ENCODE measurements at regions of chr1 and their contacts with region 1.

Region 1: DNA sequence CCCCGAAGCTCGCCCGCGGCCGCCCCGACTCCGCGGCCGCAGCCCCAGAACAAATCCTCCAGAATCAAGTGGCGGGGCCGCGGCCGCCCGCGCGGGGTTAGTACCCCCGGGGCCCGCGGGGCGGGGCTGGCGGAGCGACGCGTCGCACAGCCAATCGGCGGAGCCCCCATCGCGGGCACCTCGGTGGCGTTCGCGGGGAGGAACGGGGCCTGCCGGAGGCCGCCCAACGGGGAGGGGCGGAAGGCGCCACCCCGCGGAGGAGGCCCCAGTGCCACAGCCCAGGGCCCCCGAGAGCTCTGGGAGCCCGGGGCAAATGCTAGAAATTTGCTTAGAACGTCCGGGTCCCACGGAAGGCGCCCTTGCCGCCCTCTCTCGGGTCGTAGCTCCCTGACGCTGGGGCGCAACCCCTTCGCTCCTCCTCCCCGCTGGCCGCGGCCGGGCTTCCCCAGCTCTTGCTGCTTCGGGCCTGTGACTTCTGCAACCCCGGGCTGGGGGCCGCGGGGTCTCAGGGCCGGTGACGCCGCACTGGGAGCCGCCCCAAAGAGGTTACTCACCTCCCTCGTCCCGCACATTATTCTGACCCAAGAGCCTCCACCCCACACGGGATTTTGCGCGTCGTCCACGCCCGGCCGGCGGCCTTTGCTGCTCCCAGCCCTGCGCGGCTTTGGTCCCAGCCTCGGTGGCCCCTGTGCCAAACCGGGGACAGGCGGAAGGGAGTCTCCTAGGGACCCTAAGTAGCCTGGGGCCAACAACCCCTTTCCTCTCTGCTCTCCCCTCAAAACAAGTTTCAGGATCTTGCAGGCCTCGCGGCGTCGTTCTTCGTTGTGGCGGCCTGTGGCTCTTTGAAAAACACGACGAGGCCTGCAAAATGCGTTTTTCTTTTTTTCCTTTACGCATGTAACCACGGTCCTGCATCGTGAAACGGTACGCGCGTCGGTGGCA is at the start of gene RUNX3:
- DNase-seq: peak; percentile 74
- ATAC-seq: peak; percentile 58
- total RNA-seq, gene RUNX3: 2.0 TPM

Region 2: DNA sequence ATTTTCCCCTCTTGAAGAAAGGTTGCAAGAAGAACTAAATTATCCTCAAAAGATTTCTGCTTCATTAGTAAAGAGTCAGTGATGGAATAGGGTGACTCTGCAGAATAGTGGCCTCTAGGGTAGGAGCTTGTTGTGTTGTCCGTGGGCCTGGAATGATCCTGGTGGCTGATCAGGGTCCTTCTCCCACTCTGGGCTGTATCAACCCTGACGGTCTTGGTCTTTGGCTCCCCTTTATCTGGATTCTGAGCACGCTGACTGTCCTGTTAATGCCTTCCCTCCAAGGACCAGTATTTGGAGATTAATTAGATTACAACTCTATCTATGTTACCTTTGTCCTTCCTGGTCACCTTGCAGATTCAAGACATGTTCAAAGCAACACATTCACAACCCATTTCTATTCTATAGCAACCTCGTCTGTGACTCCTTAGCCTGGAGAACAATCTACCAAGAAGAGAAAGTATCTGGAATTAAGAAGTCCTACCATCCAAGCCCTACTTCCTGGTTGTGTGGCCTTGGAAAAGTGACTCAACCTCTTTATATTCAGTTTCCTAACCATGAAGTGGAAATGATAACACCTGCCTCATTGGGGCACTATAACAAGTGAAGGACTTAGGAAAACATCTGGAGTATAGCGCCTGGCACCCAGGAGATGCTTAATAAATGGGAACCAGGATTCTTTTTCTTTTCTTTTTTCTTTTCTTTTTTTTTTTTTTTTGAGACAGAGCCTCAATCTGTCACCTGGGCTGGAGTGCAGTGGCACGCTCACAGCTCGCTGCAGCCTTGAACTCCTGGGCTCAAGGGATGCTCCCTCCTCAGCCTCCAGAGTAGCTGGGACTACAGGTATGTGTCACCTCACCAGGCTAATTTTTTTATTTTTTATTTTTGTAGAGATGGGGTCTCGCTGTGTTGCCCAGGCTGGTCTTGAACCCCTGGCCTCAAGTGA is 323.9 kb before region 1 on chr1:
- intact Hi-C with region 1: no loop called
- DNase-seq: no peak
- ATAC-seq: no peak

Region 3: GRCh38 chr1:24909388-24909898 is 21.0 kb before region 1 on chr1:
- intact Hi-C with region 1: no loop called
- DNase-seq: peak; percentile 75
- ATAC-seq: peak; percentile 50

Region 4: GRCh38 chr1:24970399-24970753 is 39.9 kb after region 1 on chr1:
- intact Hi-C with region 1: no loop called
- DNase-seq: no peak
- ATAC-seq: no peak

Region 5: GRCh38 chr1:25204797-25205480 is 274.5 kb after region 1 on chr1:
- intact Hi-C with region 1: loop called (anchors 10 kb)
- DNase-seq: peak; percentile 13
- ATAC-seq: peak; percentile 64

Region 6: GRCh38 chr1:26203642-26204318 is 1273.3 kb after region 1 on chr1:
- intact Hi-C with region 1: loop called (anchors 5 kb)
- DNase-seq: no peak
- ATAC-seq: no peak